GM12878 (cell line): ENCODE measurements at regions of chr15 and their contacts with region 1.

Region 1: DNA sequence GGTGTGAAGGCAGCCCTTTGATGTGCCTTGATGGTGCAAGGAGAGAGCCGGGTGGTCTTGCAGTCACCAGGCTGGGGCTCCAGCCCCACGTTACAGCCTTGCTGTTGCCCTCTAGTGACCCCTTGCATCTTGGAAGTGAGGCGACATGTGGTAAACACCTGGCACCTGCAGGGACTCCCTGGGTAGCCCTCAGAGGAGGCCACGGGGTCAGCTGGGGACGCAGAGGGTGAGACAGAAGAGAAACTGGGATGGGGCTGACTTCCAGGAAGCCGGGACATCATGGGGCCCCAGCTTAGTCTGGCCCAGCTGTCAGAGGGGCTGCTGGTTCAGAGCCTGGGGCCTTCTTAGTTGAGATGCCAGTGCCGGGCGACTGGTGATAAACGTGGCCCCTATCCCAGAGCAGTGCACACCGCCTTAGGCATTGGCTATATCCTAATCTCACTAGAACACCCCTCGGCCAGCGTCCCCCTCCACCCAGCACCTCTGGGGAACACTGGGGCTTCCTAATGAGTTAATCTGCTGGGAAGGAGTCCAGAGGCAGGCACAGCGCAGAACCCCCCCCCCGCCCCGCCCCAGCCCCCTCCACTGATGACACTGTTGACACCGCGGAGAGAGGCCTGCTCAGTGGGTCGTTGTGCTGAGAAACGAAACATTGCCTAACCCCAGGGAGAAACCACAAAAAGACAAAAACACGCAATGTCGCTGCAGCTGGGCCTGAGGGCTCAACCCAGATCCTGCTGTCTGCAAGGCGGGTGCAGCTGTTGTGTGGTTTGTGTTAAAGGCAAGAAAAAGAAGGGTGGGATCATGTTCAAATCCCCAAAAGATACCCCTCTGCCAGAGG is 60.5 kb upstream of the KLF13 start:
- DNase-seq: peak; percentile 86
- ATAC-seq: peak; percentile 65
- H3K4me3 ChIP-seq: peak overlapping the region; percentile 41; the same call in 1 of the 2 replicates
- H3K27ac ChIP-seq: peak overlapping the region; percentile 94
- H3K4me1 ChIP-seq: peaks cover 63% of the 10 kb centered on the region
- H3K27me3 ChIP-seq: no peaks in the 10 kb centered on the region
- CTCF ChIP-seq: 0 out of 6 replicates have a peak, but pooled peaks of 1 of the 3 experiments have one; percentile 6
- EP300 ChIP-seq: peak; percentile 89 to 93; a peak in 3 of 4 replicates
- POLR2A ChIP-seq: no peak; the same call in 1 of the 2 replicates
- RAD21 ChIP-seq: peak; percentile 32

Region 2: GRCh38 chr15:31049682-31050615 is 216.1 kb before region 1 on chr15:
- CTCF ChIA-PET with region 1: no interaction called
- POLR2A ChIA-PET with region 1: no interaction called
- RAD21 ChIA-PET with region 1: no interaction called
- SMC1A ChIA-PET with region 1: no interaction called
- in situ Hi-C with region 1: no loop called
- intact Hi-C with region 1: no loop called
- DNase-seq: no peak
- ATAC-seq: no peak; the same call in 1 of the 3 replicates
- H3K4me3 ChIP-seq: no peak overlapping the region
- H3K27ac ChIP-seq: no peak overlapping the region
- H3K4me1 ChIP-seq: peaks cover 5% of the 10 kb centered on the region; the same call in 1 of the 2 replicates
- H3K27me3 ChIP-seq: no peaks in the 10 kb centered on the region
- CTCF ChIP-seq: no peak
- EP300 ChIP-seq: no peak
- POLR2A ChIP-seq: no peak
- RAD21 ChIP-seq: no peak

Region 3: DNA sequence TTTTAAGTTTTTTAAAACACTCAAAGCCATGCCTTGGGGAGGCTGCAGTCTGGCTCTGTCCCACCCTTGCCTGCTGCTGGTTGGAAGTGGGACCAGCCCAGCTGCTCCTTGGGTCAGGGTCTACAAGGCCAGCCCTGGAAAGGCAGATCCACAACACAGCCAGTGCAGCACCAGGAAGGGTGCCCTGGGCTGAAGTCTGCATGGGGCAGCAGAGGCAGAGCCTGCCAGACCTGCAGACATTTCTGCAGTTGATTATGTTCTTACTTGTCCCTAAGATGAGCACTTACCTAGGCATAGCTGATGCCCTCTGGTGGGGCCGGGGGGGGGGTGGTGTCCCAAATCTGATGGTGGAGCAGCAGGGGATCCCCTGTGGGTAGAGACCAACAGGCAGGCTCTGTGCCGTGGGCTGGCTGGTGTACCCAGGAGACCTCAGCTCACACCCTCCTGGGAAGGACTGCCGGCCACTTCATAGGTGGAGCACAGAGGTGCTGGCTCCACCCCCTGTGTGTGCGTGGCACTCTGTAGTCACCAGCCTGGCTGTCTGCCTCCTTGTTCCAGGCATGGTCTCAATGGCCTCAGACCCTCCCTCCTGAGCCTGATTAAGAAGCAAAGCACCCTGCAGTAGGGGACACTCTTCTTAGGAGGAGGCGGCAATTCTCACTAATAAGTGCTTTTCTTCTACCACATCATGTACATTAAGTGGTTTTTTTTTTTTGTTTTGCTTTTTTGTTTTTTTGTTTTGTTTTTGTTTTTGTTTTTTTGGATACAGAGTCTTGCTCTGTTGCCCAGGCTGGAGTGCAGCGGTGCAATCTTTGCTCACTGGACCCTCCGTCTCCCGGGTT is 36.9 kb before region 1 on chr15:
- CTCF ChIA-PET with region 1: interaction called, 66 read pairs
- POLR2A ChIA-PET with region 1: interaction called, 111 read pairs
- RAD21 ChIA-PET with region 1: interaction called, 169 read pairs
- SMC1A ChIA-PET with region 1: interaction called, 152 read pairs
- in situ Hi-C with region 1: no loop called
- intact Hi-C with region 1: loop called (anchors 2 kb)
- DNase-seq: peak; percentile 91
- ATAC-seq: peak; percentile 83
- H3K4me3 ChIP-seq: peak overlapping the region; percentile 86
- H3K27ac ChIP-seq: peak overlapping the region; percentile 80
- H3K4me1 ChIP-seq: peaks cover 37% of the 10 kb centered on the region
- H3K27me3 ChIP-seq: no peaks in the 10 kb centered on the region
- CTCF ChIP-seq: no peak
- EP300 ChIP-seq: 0 out of 4 replicates have a peak, but pooled peaks of 1 of the 2 experiments have one; percentile 27
- POLR2A ChIP-seq: peak; percentile 85
- RAD21 ChIP-seq: no peak

Region 4: GRCh38 chr15:31254431-31255175 is 11.5 kb before region 1 on chr15:
- CTCF ChIA-PET with region 1: interaction called, 22 read pairs
- POLR2A ChIA-PET with region 1: interaction called, 58 read pairs
- RAD21 ChIA-PET with region 1: interaction called, 43 read pairs
- SMC1A ChIA-PET with region 1: interaction called, 77 read pairs
- in situ Hi-C with region 1: no loop called
- intact Hi-C with region 1: no loop called
- DNase-seq: no peak
- ATAC-seq: no peak
- H3K4me3 ChIP-seq: no peak overlapping the region
- H3K27ac ChIP-seq: peak overlapping the region; percentile 76
- H3K4me1 ChIP-seq: peaks cover 38% of the 10 kb centered on the region
- H3K27me3 ChIP-seq: no peaks in the 10 kb centered on the region
- CTCF ChIP-seq: no peak
- EP300 ChIP-seq: no peak
- POLR2A ChIP-seq: no peak
- RAD21 ChIP-seq: no peak

Region 5: DNA sequence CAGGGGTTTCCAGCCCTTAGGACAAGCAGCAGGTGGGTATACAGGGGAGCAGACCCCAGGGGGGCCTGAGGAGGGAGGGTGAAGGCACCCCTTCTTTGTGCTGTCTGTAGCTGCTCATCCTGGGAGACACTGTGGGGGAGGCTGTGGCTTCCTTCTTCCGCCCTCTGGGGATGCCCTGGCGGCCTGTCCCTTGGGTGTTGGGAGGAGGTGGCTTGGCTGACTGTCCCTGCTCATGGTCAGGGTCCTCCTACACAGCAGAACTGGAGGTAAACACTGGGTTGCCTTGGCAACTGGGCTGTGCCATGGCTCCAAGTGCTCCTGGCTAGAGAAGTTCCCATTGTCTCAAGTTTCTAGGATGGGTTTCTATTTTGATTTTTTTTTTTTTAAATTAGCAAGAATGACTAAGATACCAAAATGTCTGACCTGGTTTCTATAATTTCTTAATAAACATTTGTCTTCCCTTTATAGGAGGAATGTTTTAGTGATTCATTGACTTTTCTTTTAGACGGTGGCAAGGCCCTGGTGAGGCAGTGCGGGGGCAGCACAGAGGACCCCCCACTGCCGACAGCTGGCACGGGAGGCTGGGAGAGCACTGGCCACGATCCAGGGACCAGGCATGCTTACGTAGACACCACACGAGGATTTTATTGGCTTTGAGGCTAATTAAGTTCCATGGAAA is 72.9 kb after region 1 on chr15:
- CTCF ChIA-PET with region 1: interaction called, 3 read pairs
- POLR2A ChIA-PET with region 1: interaction called, 3 read pairs
- RAD21 ChIA-PET with region 1: interaction called, 13 read pairs
- SMC1A ChIA-PET with region 1: interaction called, 3 read pairs
- in situ Hi-C with region 1: no loop called
- intact Hi-C with region 1: no loop called
- DNase-seq: peak; percentile 75
- ATAC-seq: peak; percentile 81
- H3K4me3 ChIP-seq: peak overlapping the region; percentile 22; the same call in 1 of the 2 replicates
- H3K27ac ChIP-seq: peak overlapping the region; percentile 83
- H3K4me1 ChIP-seq: peaks cover 91% of the 10 kb centered on the region
- H3K27me3 ChIP-seq: no peaks in the 10 kb centered on the region
- CTCF ChIP-seq: no peak
- EP300 ChIP-seq: peak in 1 of 2 experiments; percentile 19; a peak in 2 of 4 replicates
- POLR2A ChIP-seq: no peak
- RAD21 ChIP-seq: no peak

Region 6: DNA sequence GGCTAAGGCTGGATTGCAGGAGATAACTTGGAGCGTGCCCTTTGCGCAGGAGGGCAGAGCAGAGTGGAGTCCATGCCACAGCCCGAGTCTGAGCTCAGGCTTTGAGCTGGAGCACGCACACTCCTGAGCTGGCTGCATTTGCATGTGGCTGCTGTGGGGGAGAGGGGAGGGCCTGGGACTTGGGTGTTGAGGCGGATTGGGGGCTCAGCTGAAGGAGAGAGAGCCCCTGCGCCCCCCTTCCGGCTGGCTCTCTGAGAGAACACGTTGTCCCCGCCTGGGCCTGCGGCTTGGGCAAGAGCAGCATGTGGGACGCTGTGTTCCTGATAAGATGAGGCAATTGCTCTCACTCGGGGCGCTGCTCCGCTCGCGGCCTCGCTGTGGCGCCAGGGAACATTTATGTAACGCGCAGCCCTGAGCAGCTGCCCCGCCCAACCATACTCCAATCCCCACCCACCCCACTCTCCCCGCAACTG is 99.6 kb after region 1 on chr15:
- CTCF ChIA-PET with region 1: interaction called, 4 read pairs
- POLR2A ChIA-PET with region 1: no interaction called
- RAD21 ChIA-PET with region 1: interaction called, 15 read pairs
- SMC1A ChIA-PET with region 1: no interaction called
- in situ Hi-C with region 1: no loop called
- intact Hi-C with region 1: loop called (anchors 5 kb)
- DNase-seq: no peak
- ATAC-seq: peak; percentile 81
- H3K4me3 ChIP-seq: peak overlapping the region; percentile 20; the same call in 1 of the 2 replicates
- H3K27ac ChIP-seq: peak overlapping the region; percentile 41
- H3K4me1 ChIP-seq: peaks cover 75% of the 10 kb centered on the region
- H3K27me3 ChIP-seq: no peaks in the 10 kb centered on the region
- CTCF ChIP-seq: peak; percentile 32 to 57 (median 50); a peak in 4 of 6 replicates
- EP300 ChIP-seq: no peak
- POLR2A ChIP-seq: no peak
- RAD21 ChIP-seq: 0 out of 2 replicates have a peak, but pooled peaks have one; percentile 38

Region 7: GRCh38 chr15:31571671-31572070 is 305.6 kb after region 1 on chr15:
- CTCF ChIA-PET with region 1: no interaction called
- POLR2A ChIA-PET with region 1: no interaction called
- RAD21 ChIA-PET with region 1: no interaction called
- SMC1A ChIA-PET with region 1: no interaction called
- in situ Hi-C with region 1: no loop called
- intact Hi-C with region 1: no loop called
- DNase-seq: no peak
- ATAC-seq: no peak
- H3K4me3 ChIP-seq: no peak overlapping the region
- H3K27ac ChIP-seq: no peak overlapping the region
- H3K4me1 ChIP-seq: no peaks in the 10 kb centered on the region
- H3K27me3 ChIP-seq: no peaks in the 10 kb centered on the region
- CTCF ChIP-seq: no peak; a peak in 1 of 6 replicates
- EP300 ChIP-seq: no peak
- POLR2A ChIP-seq: no peak
- RAD21 ChIP-seq: 0 out of 2 replicates have a peak, but pooled peaks have one; percentile 5

Region 8: GRCh38 chr15:31740203-31740602 is 474.1 kb after region 1 on chr15:
- CTCF ChIA-PET with region 1: no interaction called
- POLR2A ChIA-PET with region 1: no interaction called
- RAD21 ChIA-PET with region 1: no interaction called
- SMC1A ChIA-PET with region 1: no interaction called
- in situ Hi-C with region 1: no loop called
- intact Hi-C with region 1: no loop called
- DNase-seq: no peak
- ATAC-seq: no peak
- H3K4me3 ChIP-seq: no peak overlapping the region
- H3K27ac ChIP-seq: no peak overlapping the region
- H3K4me1 ChIP-seq: no peaks in the 10 kb centered on the region
- H3K27me3 ChIP-seq: no peaks in the 10 kb centered on the region
- CTCF ChIP-seq: no peak
- EP300 ChIP-seq: no peak
- POLR2A ChIP-seq: no peak
- RAD21 ChIP-seq: no peak